GM23248 (cell line): ENCODE measurements at regions of chr3 and their contacts with region 1.

Region 1: DNA sequence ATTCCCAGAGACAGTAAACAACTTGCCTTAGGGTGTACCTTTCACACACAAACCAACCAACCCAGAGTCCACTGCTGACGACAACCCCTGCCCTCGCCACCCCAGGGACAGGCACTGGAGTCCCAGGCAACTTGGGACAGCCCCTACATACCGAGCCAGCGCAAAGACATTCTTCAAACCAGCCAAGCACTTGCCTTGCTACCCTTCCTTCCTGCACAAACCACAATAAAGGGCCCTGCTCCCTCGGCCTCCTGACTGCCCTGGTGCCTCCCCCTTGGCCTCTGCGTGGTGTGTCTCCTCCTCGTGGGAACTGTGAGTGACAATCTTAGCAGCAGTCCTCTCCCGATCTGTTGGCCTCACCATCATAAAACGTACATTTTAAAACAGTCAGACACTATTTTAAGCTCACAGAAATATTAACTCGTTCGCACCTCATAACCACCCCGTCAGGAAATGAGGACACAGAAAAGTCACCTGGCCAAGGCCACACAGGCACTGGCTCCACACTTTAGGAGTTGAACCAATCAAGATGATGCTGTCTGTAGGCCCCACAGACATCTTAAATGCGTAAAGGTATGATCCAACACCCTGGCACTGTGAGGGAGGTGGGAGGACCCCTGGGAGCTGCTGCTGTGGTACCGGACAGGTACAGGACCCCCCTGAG is 113.8 kb downstream of the ADCY5 start:
- DNase-seq: no peak
- H3K4me3 ChIP-seq: no peak overlapping the region
- H3K27ac ChIP-seq: no peak overlapping the region
- H3K4me1 ChIP-seq: no peaks in the 10 kb centered on the region
- H3K27me3 ChIP-seq: peaks cover 12% of the 10 kb centered on the region

Region 2: GRCh38 chr3:123489400-123490004 is 154.4 kb after region 1 on chr3:
- in situ Hi-C with region 1: loop called (anchors 10 kb)
- DNase-seq: peak; percentile 72
- H3K4me3 ChIP-seq: no peak overlapping the region
- H3K27ac ChIP-seq: no peak overlapping the region
- H3K4me1 ChIP-seq: no peaks in the 10 kb centered on the region
- H3K27me3 ChIP-seq: no peaks in the 10 kb centered on the region